ENCODE measurements at regions of chr6 and their contacts with region 1.

Region 1: DNA sequence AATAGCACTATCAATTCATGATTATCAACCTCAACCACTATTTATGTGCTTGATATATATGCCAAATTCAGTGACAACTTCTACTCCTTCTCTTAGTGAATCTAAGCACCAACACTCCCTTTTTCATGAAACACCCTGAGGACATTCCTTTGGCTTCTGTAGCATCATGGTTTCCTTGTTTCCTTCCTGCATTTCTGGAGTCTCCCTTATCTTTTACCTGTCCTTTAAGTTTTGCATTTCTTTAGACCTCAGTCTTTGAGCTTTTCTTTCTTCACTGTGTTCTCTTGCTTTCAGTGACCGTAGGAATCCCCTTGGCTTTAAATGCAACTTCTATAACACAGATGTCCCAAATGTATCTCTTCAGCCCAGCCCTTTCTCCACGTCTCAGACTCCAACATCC is 143.8 kb upstream of the MLIP start:
- DNase-seq: no peak
- H3K4me3 ChIP-seq: no peak overlapping the region
- H3K27ac ChIP-seq: no peak overlapping the region
- H3K4me1 ChIP-seq: no peaks in the 10 kb centered on the region; the same call in 1 of the 2 replicates
- H3K27me3 ChIP-seq: no peaks in the 10 kb centered on the region
- CTCF ChIP-seq: no peak

Region 2: DNA sequence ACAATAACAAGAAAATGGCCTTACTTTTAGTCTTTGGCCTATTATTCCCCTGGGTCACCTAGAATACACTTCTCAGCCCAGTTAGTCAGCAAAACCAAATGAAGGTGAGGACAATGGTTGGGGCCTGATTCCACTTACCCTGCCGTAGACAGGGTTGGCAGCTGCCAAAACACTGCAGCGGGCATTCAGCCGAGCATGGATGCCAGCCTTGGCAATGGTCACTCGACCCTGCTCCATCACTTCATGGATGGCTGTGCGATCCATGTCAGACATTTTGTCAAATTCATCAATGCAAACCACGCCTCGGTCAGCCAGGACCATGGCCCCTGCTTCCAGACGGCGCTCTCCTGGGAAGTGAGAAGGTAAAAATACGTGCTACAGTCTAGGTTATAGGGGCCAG is 1691.3 kb before region 1 on chr6:
- CTCF ChIA-PET with region 1: no interaction called
- POLR2A ChIA-PET with region 1: no interaction called
- intact Hi-C with region 1: no loop called
- DNase-seq: no peak
- H3K4me3 ChIP-seq: no peak overlapping the region
- H3K27ac ChIP-seq: no peak overlapping the region
- H3K4me1 ChIP-seq: no peaks in the 10 kb centered on the region
- H3K27me3 ChIP-seq: no peaks in the 10 kb centered on the region
- CTCF ChIP-seq: no peak

Region 3: DNA sequence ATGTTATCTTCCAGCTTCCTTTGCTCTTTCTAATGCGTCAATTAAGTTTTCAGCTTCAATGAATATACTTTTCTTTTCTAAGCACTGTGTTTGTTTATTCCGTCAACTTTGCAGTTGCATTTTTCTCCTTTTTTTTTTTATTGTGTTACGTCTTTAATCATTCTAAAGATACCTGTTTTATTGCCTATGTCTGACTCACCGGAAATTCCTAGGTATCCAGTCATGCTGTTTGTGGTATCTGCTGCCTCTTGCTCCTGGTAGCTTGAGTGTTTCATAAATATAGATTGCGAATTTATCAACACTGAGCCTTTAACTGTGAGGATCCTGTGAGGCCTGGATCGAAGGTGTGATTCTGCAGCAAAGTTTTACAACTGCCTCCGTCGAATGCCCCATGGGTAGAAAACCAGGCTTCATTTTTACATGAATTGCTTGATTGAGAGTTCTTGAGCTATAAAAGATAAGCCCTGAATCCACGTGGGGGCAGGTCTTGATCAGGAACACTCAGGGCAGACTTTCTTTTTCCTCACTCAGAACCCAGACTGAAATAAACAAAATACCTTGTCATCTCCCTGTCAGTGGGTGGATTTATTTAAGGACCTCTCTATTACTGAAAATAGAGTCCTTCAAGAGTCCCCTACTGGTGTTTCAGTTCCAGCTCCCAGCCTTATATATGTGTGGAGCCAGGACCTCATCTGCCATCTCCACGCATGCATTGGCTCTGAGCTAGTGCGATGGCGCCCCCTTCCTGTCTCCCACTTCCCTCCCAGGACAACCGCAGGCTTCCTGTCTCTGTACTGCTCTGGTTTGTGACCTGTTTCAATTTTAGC is 232.7 kb before region 1 on chr6:
- CTCF ChIA-PET with region 1: no interaction called
- POLR2A ChIA-PET with region 1: interaction called, 11 read pairs
- intact Hi-C with region 1: no loop called
- DNase-seq: peak; percentile 59 to 96
- H3K4me3 ChIP-seq: peak overlapping the region; percentile 44
- H3K27ac ChIP-seq: peak overlapping the region; percentile 95
- H3K4me1 ChIP-seq: peaks cover 53% of the 10 kb centered on the region
- H3K27me3 ChIP-seq: no peaks in the 10 kb centered on the region
- CTCF ChIP-seq: peak; percentile 61

Region 4: DNA sequence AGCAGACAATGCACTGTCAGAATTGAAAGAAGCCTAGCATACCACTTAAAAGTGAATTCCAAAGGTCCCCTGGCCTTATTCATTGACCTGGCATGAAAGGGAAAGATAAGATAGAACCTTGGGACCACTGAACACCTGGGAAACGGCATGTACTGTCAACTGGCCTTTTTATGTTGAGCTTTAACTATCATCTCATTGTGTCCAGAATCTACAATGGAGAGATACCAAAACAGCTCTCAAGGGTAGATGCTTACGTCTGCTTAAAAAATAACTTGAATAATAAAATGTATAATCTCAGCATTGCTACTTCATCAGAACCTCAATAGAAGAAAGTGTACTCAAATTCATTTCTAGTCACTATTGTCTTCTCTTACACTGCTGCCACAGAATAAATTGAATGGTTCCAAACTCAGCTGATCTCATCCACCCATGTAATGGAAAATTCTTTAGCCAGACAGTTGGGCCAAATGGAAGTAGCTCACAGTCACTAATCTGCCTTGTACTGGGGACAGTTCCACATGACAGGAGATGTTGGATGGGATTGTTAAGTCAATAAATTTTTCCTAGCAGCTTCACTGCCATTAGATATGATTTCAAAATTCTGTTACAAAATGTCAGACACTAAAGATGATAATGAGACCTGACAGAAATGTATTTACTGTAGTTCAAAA is 237.6 kb after region 1 on chr6:
- CTCF ChIA-PET with region 1: no interaction called
- POLR2A ChIA-PET with region 1: no interaction called
- intact Hi-C with region 1: no loop called
- DNase-seq: no peak
- H3K4me3 ChIP-seq: no peak overlapping the region
- H3K27ac ChIP-seq: no peak overlapping the region
- H3K4me1 ChIP-seq: no peaks in the 10 kb centered on the region
- H3K27me3 ChIP-seq: no peaks in the 10 kb centered on the region
- CTCF ChIP-seq: no peak

Measured in PC-9 (cell line).